CD4-positive, alpha-beta memory T cell (primary cell): ENCODE measurements at regions of chr15 and their contacts with region 1.

Region 1: GRCh38 chr15:34587717-34588674 is 4.5 kb upstream of the GOLGA8B start:
- DNase-seq: peak; percentile 67 to 72 (median 68)
- H3K4me3 ChIP-seq: no peak overlapping the region
- H3K4me3 Mint-ChIP-seq: peak overlapping the region; percentile 42 to 82 (median 71)
- H3K27ac ChIP-seq: no peak overlapping the region
- H3K27ac Mint-ChIP-seq: peak overlapping the region in 4 of 7 donors; percentile 1 to 82 (median 64)
- H3K4me1 ChIP-seq: peaks cover 11% of the 10 kb centered on the region
- H3K4me1 Mint-ChIP-seq: peaks cover 4 to 6% (median 5%) of the 10 kb centered on the region in 4 donors
- H3K27me3 ChIP-seq: no peaks in the 10 kb centered on the region
- H3K27me3 Mint-ChIP-seq: peaks cover 0 to 5% of the 10 kb centered on the region in 2 donors

Region 2: GRCh38 chr15:34064438-34064837 is 523.6 kb before region 1 on chr15:
- CTCF ChIA-PET with region 1: interaction called, 14 read pairs
- POLR2A ChIA-PET with region 1: no interaction called
- intact Hi-C with region 1: loop called (anchors 1 kb)
- DNase-seq: no peak
- H3K4me3 ChIP-seq: no peak overlapping the region
- H3K4me3 Mint-ChIP-seq: no peak overlapping the region
- H3K27ac ChIP-seq: no peak overlapping the region
- H3K27ac Mint-ChIP-seq: peak overlapping the region in 2 of 7 donors; percentile 1 to 68
- H3K4me1 ChIP-seq: no peaks in the 10 kb centered on the region
- H3K4me1 Mint-ChIP-seq: peaks cover 3 to 9% (median 5%) of the 10 kb centered on the region in 4 donors
- H3K27me3 ChIP-seq: no peaks in the 10 kb centered on the region
- H3K27me3 Mint-ChIP-seq: no peaks in the 10 kb centered on the region

Region 3: GRCh38 chr15:34109797-34110663 is 478.0 kb before region 1 on chr15:
- CTCF ChIA-PET with region 1: interaction called, 4 read pairs
- POLR2A ChIA-PET with region 1: no interaction called
- intact Hi-C with region 1: loop called (anchors 1 kb)
- DNase-seq: peak in 4 of 5 donors; percentile 6 to 28 (median 16)
- H3K4me3 ChIP-seq: no peak overlapping the region
- H3K4me3 Mint-ChIP-seq: peak overlapping the region in 1 of 8 donors; percentile 4
- H3K27ac ChIP-seq: no peak overlapping the region
- H3K27ac Mint-ChIP-seq: peak overlapping the region in 2 of 7 donors; percentile 49 to 56
- H3K4me1 ChIP-seq: no peaks in the 10 kb centered on the region
- H3K4me1 Mint-ChIP-seq: peaks cover 0 to 3% (median 0%) of the 10 kb centered on the region in 4 donors
- H3K27me3 ChIP-seq: peaks cover 7% of the 10 kb centered on the region
- H3K27me3 Mint-ChIP-seq: peaks cover 0 to 4% of the 10 kb centered on the region in 2 donors

Region 4: DNA sequence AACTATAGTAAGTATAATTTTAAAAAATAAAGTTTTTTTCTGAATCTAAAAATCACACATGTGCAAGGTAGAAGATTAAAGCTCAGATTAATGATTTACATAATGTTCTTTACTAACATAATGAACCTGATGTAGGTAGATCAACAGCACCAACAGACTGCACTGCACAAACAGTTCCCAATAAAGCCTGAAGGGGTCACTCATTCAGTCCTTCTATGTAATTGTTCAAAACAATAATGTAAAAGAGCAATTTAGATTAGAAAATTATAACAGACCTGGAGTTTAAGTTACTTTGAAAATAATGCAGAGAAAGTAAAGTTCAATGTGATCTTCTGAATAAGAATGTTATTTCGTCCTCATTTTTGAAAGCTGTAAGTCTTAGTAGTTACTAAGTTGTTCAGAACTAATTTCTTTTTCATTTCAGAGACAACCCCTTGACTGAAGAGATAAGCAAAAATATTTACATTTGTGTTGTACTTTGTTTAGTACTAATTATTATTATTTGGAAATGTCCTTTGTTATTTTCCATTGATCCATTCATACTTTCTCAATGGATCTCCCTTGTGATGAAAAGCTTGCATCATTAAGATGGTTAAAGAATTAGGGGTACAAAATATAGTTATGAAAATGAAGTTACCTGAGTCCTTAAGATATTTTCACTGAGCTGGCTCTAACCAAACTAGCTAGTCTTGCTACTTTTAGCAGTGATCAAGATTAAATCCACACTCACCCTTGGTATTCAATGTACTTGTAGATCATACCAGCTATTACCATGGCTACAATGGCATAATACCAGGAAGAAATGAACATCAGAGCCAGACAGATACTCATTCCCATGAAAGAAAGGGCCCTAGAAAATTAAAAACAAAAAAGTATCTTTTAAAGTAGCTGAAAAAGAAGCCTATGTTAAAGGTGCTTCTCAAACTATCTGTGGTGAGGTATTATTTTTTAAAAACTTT is 346.3 kb before region 1 on chr15:
- CTCF ChIA-PET with region 1: interaction called, 27 read pairs
- POLR2A ChIA-PET with region 1: interaction called, 3 read pairs
- intact Hi-C with region 1: loop called (anchors 1 kb)
- DNase-seq: peak; percentile 42 to 56 (median 55)
- H3K4me3 ChIP-seq: no peak overlapping the region
- H3K4me3 Mint-ChIP-seq: no peak overlapping the region
- H3K27ac ChIP-seq: no peak overlapping the region
- H3K27ac Mint-ChIP-seq: peak overlapping the region in 4 of 7 donors; percentile 4 to 53 (median 46)
- H3K4me1 ChIP-seq: no peaks in the 10 kb centered on the region
- H3K4me1 Mint-ChIP-seq: no peaks in the 10 kb centered on the region
- H3K27me3 ChIP-seq: no peaks in the 10 kb centered on the region
- H3K27me3 Mint-ChIP-seq: no peaks in the 10 kb centered on the region

Region 5: GRCh38 chr15:34520566-34520965 is 67.4 kb before region 1 on chr15:
- CTCF ChIA-PET with region 1: interaction called, 16 read pairs
- POLR2A ChIA-PET with region 1: interaction called, 3 read pairs
- intact Hi-C with region 1: no loop called
- DNase-seq: no peak
- H3K4me3 ChIP-seq: no peak overlapping the region
- H3K4me3 Mint-ChIP-seq: no peak overlapping the region
- H3K27ac ChIP-seq: no peak overlapping the region
- H3K27ac Mint-ChIP-seq: no peak overlapping the region
- H3K4me1 ChIP-seq: peaks cover 2% of the 10 kb centered on the region
- H3K4me1 Mint-ChIP-seq: peaks cover 0 to under 1% (median 0%) of the 10 kb centered on the region in 4 donors
- H3K27me3 ChIP-seq: no peaks in the 10 kb centered on the region
- H3K27me3 Mint-ChIP-seq: peaks cover 0 to 3% of the 10 kb centered on the region in 2 donors